ENCODE measurements at regions of chr10 and their contacts with region 1.

Region 1: DNA sequence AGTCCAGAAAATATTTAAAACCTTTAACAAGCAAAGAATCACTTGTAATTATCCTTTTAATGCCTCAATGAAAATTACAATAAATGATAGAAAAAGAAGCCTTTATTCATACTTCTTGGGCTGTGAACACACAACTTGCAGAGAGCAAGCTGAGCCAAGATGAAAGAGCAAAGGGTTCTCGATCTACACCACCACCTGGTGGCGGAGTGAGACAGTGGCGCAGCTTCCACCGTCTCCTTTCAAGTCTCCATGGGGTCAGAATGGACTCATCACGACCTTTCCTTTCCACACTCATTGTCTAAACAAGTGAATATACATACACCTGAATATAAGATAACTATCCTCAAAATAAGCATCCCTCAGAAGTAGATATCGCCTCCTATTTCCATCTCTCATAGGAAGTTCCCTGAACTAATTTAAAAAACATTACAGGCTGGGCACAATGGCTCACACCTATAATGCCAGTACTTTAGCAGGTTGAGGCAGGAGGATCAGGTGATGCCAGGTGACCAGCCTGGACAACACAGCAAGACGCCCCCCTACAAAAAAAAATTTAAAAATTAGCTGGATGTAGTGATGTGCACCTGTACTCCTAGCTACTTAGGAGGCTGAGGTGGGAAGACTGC is 40.7 kb downstream of the ATE1 start:
- DNase-seq: peak; percentile 61
- ATAC-seq: peak; percentile 68
- H3K4me3 Mint-ChIP-seq: no peak overlapping the region
- H3K27ac Mint-ChIP-seq: no peak overlapping the region
- H3K4me1 Mint-ChIP-seq: no peaks in the 10 kb centered on the region
- H3K27me3 Mint-ChIP-seq: no peaks in the 10 kb centered on the region

Region 2: GRCh38 chr10:121823993-121824463 is 63.1 kb before region 1 on chr10:
- CTCF ChIA-PET with region 1: interaction called, 23 read pairs
- DNase-seq: no peak
- ATAC-seq: no peak
- H3K4me3 Mint-ChIP-seq: no peak overlapping the region
- H3K27ac Mint-ChIP-seq: no peak overlapping the region
- H3K4me1 Mint-ChIP-seq: no peaks in the 10 kb centered on the region
- H3K27me3 Mint-ChIP-seq: no peaks in the 10 kb centered on the region

Region 3: DNA sequence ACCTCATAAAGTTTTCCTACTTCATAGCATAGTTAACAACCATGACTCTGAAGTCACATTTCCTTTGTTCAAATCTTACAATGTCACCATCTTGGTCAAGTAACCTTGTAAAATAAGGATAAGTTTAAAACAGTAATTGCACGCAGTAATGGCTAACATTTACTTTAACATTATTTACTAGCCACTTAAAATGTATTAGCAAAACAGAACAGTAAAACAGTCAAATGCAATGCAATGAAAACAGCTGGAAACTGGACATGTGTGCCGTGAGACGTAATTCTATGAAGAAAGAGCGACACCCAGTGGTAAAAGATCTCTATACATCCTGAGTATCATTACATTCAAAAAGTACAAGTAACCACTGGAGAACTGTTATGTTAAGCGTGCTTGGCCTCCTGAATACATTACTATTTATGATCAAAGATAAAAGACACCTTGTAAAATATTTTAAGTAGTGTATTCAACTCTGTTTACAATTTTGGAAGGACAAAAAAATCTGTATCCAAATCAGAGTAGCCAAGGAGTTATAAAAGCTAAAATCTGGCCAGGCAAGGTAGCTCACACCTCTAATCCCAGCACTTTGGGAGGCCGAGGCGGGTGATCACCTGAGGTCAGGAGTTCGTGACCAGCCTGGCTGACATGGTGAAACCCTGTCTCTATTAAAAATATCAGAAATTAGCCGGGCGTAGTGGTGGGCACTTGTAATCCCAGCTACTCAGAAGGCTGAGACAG is 13.5 kb after region 1 on chr10:
- CTCF ChIA-PET with region 1: interaction called, 16 read pairs
- DNase-seq: no peak
- ATAC-seq: peak; percentile 77
- H3K4me3 Mint-ChIP-seq: no peak overlapping the region
- H3K27ac Mint-ChIP-seq: no peak overlapping the region
- H3K4me1 Mint-ChIP-seq: peaks cover 3% of the 10 kb centered on the region
- H3K27me3 Mint-ChIP-seq: no peaks in the 10 kb centered on the region

Region 4: GRCh38 chr10:121921238-121921931 is 34.3 kb after region 1 on chr10:
- CTCF ChIA-PET with region 1: no interaction called
- DNase-seq: no peak
- ATAC-seq: no peak
- H3K4me3 Mint-ChIP-seq: no peak overlapping the region
- H3K27ac Mint-ChIP-seq: no peak overlapping the region
- H3K4me1 Mint-ChIP-seq: peaks cover 8% of the 10 kb centered on the region
- H3K27me3 Mint-ChIP-seq: no peaks in the 10 kb centered on the region

Region 5: GRCh38 chr10:122587098-122587760 is 700.1 kb after region 1 on chr10:
- CTCF ChIA-PET with region 1: no interaction called
- DNase-seq: no peak
- ATAC-seq: no peak
- H3K4me3 Mint-ChIP-seq: no peak overlapping the region
- H3K27ac Mint-ChIP-seq: no peak overlapping the region
- H3K4me1 Mint-ChIP-seq: no peaks in the 10 kb centered on the region
- H3K27me3 Mint-ChIP-seq: no peaks in the 10 kb centered on the region

Measured in activated CD8-positive, alpha-beta memory T cell treated with anti-CD3 and anti-CD28 coated beads, Interleukin-2, amount 10 ng/mL, durations not matched to agents 7 days and 5 days (primary cell).